Naive thymus-derived CD8-positive, alpha-beta T cell (primary cell): ENCODE measurements at regions of chr17 and their contacts with region 1.

Region 1: GRCh38 chr17:64506576-64507477 is at the start of gene CEP95:
- DNase-seq: peak; percentile 88 to 99 (median 96)
- ATAC-seq: peak; percentile 60 to 70
- H3K4me3 Mint-ChIP-seq: peak within 1 kb of the TSS; percentile 98 to 100 (median 100)
- H3K27ac Mint-ChIP-seq: peak within 1 kb of the TSS; percentile 99 to 100 (median 100)
- H3K4me1 Mint-ChIP-seq: peaks cover 30 to 81% (median 57%) of the 10 kb centered on the region in 4 donors
- H3K27me3 Mint-ChIP-seq: peaks cover 0 to 6% (median 0%) of the 10 kb centered on the region in 5 donors
- polyA plus RNA-seq, gene CEP95: 8.6 to 20.1 (median 9.0) TPM

Region 2: GRCh38 chr17:64315032-64315490 is 191.8 kb before region 1 on chr17:
- POLR2A ChIA-PET with region 1: no interaction called
- DNase-seq: no peak
- ATAC-seq: no peak
- H3K4me3 Mint-ChIP-seq: no peak overlapping the region
- H3K27ac Mint-ChIP-seq: no peak overlapping the region
- H3K4me1 Mint-ChIP-seq: peaks cover 2 to 16% (median 13%) of the 10 kb centered on the region in 4 donors
- H3K27me3 Mint-ChIP-seq: no peaks in the 10 kb centered on the region

Region 3: GRCh38 chr17:64343853-64344637 is 162.8 kb before region 1 on chr17:
- POLR2A ChIA-PET with region 1: interaction called, 28 read pairs
- DNase-seq: no peak
- ATAC-seq: no peak
- H3K4me3 Mint-ChIP-seq: no peak overlapping the region
- H3K27ac Mint-ChIP-seq: peak overlapping the region in 9 of 10 donors; percentile 43 to 83 (median 79)
- H3K4me1 Mint-ChIP-seq: peaks cover 5 to 49% (median 33%) of the 10 kb centered on the region in 4 donors
- H3K27me3 Mint-ChIP-seq: no peaks in the 10 kb centered on the region

Region 4: DNA sequence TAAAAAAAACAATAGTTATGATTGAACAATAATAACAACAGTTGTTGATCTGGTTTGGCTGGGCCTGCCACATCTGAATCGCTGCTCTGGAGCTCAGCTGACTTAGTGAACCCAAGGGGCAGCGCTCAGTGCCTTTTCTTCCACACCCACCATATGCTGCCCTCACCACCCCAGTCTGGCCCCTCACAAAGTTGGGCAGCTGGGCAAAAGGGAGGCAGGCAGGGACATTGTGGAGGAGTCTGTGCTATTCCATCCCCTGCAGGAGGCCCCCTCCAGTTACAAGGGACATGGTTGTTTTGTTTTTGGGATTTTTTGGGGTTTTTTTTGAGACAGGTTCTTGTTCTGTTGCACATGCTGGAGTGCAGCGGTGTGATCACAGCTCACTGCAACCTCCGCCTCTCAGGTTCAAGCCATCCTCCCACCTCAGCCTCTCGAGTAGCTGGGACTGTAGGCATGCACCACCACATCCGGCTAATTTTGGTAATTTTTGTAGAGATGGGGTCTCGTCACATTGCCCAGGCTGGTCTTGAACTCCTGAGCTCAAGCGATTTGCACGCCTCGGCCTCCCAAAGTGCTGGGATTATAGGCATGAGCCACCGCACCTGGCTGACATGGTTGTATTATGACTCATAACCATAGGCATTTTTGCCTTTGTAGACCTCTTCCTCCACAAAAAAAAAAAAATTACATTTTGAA is 107.6 kb before region 1 on chr17:
- POLR2A ChIA-PET with region 1: interaction called, 115 read pairs
- DNase-seq: no peak
- ATAC-seq: no peak
- H3K4me3 Mint-ChIP-seq: peak overlapping the region; percentile 32 to 79 (median 48)
- H3K27ac Mint-ChIP-seq: peak overlapping the region; percentile 56 to 99 (median 87)
- H3K4me1 Mint-ChIP-seq: peaks cover 25 to 79% (median 49%) of the 10 kb centered on the region in 4 donors
- H3K27me3 Mint-ChIP-seq: no peaks in the 10 kb centered on the region

Region 5: DNA sequence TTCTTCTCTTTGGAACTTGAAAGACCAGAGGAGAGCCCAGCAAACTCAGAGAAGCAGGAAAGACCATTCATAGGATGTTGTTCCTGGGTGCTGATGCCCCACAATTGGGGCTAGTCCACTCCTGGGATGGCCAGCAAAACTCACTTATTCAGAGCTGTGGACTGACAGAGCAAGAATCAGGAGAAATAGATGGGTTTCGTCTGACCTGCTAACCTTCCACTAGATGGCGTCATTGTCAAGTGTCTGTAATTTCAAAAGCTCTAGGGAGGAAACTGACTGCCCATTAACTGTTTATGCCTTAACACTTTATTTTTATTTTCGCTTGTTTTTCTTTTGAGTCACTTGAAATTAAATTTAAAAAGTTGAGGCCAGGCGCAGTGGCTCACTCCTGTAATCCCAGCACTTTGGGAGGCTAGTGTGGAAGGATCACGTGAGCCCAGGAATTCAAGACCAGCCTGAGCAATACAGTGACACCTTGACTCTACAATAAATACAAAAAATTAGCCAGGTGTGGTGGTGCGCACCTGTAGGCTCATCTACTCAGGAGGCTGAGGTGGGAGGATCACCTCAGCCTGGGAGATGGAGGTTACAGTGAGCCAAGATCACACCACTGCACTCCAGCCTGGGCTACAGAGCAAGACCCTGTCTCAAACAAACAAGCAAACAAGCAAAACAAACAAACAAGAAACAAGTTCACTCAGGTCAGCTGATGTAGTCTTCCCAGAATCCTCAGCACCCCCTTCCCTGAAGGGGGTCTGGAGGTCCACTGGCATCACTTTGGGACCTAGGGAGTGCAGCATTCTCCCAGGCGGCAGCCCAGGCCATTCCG is 86.5 kb before region 1 on chr17:
- POLR2A ChIA-PET with region 1: interaction called, 59 read pairs
- DNase-seq: peak in 6 of 10 donors; percentile 35 to 82 (median 62)
- ATAC-seq: peak; percentile 83 to 89
- H3K4me3 Mint-ChIP-seq: no peak overlapping the region
- H3K27ac Mint-ChIP-seq: no peak overlapping the region
- H3K4me1 Mint-ChIP-seq: peaks cover 0 to 4% (median 2%) of the 10 kb centered on the region in 4 donors
- H3K27me3 Mint-ChIP-seq: no peaks in the 10 kb centered on the region

Region 6: GRCh38 chr17:64470625-64471024 is 36.2 kb before region 1 on chr17:
- POLR2A ChIA-PET with region 1: no interaction called
- DNase-seq: no peak
- ATAC-seq: no peak
- H3K4me3 Mint-ChIP-seq: no peak overlapping the region
- H3K27ac Mint-ChIP-seq: peak overlapping the region in 1 of 10 donors; percentile 15
- H3K4me1 Mint-ChIP-seq: peaks cover 0 to 2% (median 0%) of the 10 kb centered on the region in 4 donors
- H3K27me3 Mint-ChIP-seq: no peaks in the 10 kb centered on the region

Region 7: DNA sequence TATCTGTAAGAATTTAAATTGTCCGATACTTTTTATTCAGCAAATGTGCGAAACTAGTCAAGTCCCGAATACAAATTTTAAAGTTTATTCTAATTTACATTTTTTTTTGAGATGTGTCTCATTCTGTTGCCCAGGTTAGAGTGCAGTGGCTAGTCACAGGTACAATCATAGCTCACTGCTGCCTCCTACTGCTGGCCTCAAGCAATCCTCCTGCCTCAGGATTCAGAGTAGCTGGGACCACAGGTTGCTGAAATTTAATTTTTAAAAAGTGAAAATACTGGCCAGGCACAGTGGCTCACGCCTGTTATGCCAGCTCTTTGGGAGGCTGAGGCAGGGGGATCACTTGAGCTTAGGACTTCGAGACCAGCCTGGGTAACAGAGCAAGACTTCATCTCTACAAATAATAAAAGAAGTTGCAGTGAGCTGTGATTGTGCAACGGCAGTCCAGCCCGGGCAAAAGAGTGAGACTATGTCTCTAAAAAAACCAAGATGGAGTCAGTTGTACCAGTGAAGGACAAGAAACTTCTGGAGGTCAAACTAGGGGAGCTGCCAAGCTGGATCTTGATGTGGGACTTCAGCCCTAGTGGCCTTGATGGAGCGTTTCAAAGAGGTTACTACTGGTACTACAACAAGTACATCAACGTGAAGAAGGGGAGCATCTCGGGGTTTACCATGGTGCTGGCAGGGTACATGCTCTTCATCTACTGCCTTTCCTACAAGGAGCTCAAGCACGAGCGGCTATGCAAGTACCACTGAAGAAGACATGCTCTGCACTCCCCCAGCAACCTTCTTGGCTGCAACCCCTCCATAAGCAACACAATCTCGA is 15.6 kb before region 1 on chr17:
- POLR2A ChIA-PET with region 1: interaction called, 233 read pairs
- DNase-seq: peak in 7 of 10 donors; percentile 18 to 54 (median 41)
- ATAC-seq: peak; percentile 52 to 79
- H3K4me3 Mint-ChIP-seq: peak overlapping the region in 1 of 10 donors; percentile 34
- H3K27ac Mint-ChIP-seq: peak overlapping the region in 1 of 10 donors; percentile 24
- H3K4me1 Mint-ChIP-seq: peaks cover 12 to 41% (median 27%) of the 10 kb centered on the region in 4 donors
- H3K27me3 Mint-ChIP-seq: no peaks in the 10 kb centered on the region

Region 8: GRCh38 chr17:64622931-64623654 is 116.3 kb after region 1 on chr17:
- POLR2A ChIA-PET with region 1: no interaction called
- DNase-seq: no peak
- ATAC-seq: no peak
- H3K4me3 Mint-ChIP-seq: no peak overlapping the region
- H3K27ac Mint-ChIP-seq: no peak overlapping the region
- H3K4me1 Mint-ChIP-seq: peaks cover 21 to 43% (median 38%) of the 10 kb centered on the region in 4 donors
- H3K27me3 Mint-ChIP-seq: no peaks in the 10 kb centered on the region